ENCODE measurements at regions of chr5 and their contacts with region 1.

Region 1: DNA sequence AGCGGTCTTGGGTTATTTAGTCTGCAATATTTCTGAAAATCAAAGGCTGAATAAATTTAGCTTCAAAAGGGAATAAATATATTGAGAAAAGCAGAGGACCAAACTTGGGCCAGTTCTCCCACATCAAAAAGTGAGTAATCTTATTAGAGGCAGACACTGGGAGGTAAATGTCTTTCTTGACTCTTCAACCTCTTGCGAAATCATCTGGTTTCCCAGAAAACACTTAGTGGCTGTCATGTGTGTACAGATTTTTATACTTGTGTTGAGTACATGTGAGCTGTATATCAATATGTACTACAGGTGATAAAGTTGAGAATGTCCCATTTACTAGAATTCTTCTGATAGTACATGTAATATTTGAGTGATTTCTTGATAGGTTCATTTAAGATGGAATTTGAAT is 454.9 kb downstream of the PRR16 start:
- DNase-seq: no peak
- ATAC-seq: no peak

Region 2: DNA sequence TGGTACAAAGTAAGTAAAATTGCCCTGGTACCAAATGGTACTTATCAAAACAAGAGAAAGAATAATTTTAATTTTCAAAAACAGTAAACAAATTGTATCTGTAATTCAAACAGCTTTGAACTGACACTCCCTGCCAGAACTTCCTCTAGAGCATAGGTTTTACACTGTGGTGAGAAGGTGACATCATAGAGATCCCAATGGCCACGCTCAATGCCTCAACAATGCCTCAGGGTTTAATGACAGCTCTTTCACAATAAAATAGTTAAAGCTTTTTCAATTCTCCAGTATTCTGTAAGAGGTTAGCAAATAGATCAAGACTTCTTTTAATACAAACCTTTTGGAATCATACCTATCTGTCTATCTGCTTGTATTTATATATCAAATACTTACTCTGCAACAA is 17.8 kb before region 1 on chr5:
- intact Hi-C with region 1: loop called in 1 of 2 experiments (anchors 2 kb)
- DNase-seq: no peak
- ATAC-seq: no peak

Region 3: DNA sequence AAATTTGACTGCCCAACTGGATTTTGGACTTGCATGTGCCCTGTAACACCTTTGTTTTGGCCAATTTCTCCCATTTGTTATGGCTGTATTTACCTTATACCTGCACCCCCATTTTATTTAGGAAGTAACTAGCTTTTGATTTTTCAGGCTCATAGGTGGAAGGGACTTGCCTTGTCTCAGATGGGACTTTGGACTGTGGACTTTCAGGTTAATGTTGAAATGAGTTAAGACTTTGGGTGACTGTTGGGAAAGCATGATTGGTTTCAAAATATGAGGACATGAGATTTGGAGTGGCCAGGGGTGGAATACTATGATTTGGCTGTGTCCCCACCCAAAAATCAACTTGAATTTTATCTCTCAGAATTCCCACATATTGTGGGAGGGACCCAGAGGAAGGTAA is 35.2 kb after region 1 on chr5:
- intact Hi-C with region 1: no loop called
- DNase-seq: no peak
- ATAC-seq: no peak

Measured in left cardiac atrium (tissue), 4 donors.